ENCODE measurements at regions of chr10 and their contacts with region 1.

Region 1: DNA sequence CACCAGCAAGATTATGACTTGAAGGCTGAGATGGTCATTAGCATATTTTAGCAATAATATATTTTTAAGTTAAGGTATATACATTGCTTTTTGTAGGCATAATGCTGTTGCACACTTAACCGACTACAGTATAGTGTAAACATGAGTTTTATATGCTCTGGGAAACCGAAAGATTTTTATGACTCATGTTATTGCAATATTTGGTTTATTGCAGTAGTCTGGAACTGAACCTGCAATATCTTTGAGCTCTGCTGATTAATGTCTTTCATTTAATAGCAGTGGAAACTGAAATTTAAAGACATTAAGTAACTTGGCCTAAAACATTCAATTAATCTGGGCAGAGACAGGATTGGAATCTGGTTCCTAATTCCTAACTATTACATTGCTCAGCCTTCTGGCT is 266.7 kb upstream of the PLXDC2 start:
- DNase-seq: no peak

Region 2: GRCh38 chr10:19421674-19422073 is 127.8 kb before region 1 on chr10:
- intact Hi-C with region 1: no loop called
- DNase-seq: no peak

Region 3: DNA sequence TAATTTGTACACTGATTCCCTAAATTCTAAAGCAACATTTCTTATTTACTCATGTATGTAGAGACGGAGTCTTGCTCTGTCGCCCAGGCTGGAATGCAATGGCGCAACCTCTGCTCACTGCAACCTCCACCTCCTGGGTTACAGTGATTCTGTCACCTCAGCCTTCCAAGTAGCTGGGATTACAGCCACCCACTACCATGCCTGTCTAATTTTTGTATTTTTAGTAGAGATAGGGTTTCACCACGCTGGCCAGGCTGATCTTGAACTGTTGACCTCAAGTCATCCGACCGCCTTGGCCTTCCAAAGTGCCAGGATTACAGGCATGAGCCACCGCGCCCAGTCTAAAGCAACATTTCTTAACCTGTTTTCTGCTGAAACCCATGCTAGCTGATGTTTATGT is 39.1 kb after region 1 on chr10:
- intact Hi-C with region 1: loop called in 1 of 2 experiments (anchors 2 kb)
- DNase-seq: no peak